ENCODE measurements at regions of chr4 and their contacts with region 1.

Region 1: GRCh38 chr4:98467627-98468072 is 190.8 kb downstream of the TSPAN5 start:
- DNase-seq: peak; percentile 48 to 84 (median 62)
- ATAC-seq: peak; percentile 97
- H3K4me3 ChIP-seq: peak overlapping the region; percentile 32
- H3K4me3 Mint-ChIP-seq: peak overlapping the region; percentile 59
- H3K27ac ChIP-seq: no peak overlapping the region
- H3K27ac Mint-ChIP-seq: no peak overlapping the region
- H3K4me1 ChIP-seq: peaks cover 18% of the 10 kb centered on the region
- H3K4me1 Mint-ChIP-seq: peaks cover 24% of the 10 kb centered on the region
- H3K27me3 ChIP-seq: no peaks in the 10 kb centered on the region
- H3K27me3 Mint-ChIP-seq: no peaks in the 10 kb centered on the region
- CTCF ChIP-seq: peak; percentile 84

Region 2: DNA sequence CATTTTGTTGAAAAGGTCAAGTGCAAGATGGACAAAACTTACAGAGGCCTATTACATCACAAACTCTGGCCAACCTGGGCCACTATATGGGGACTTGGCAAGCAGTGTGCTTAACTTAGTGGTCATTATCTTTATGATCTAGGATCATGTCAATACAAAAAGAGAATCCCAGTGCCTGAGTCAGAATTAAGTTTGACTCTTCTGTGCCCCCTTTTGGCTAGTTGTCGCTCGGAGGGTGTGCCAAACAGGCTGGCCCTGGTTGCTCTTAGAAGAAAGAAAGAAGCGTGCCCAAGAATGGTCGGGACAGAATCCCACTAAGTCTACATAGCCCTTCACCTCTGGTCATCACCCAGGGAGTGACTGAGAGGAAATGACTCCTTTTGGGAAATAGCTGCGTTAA is 361.2 kb after region 1 on chr4:
- CTCF ChIA-PET with region 1: no interaction called
- POLR2A ChIA-PET with region 1: no interaction called
- intact Hi-C with region 1: loop called (anchors 1 kb)
- DNase-seq: peak in 13 of 14 experiments; percentile 0 to 54 (median 17)
- ATAC-seq: no peak
- H3K4me3 ChIP-seq: no peak overlapping the region
- H3K4me3 Mint-ChIP-seq: no peak overlapping the region
- H3K27ac ChIP-seq: no peak overlapping the region
- H3K27ac Mint-ChIP-seq: no peak overlapping the region
- H3K4me1 ChIP-seq: no peaks in the 10 kb centered on the region
- H3K4me1 Mint-ChIP-seq: no peaks in the 10 kb centered on the region
- H3K27me3 ChIP-seq: no peaks in the 10 kb centered on the region
- H3K27me3 Mint-ChIP-seq: no peaks in the 10 kb centered on the region
- CTCF ChIP-seq: peak; percentile 20

Region 3: DNA sequence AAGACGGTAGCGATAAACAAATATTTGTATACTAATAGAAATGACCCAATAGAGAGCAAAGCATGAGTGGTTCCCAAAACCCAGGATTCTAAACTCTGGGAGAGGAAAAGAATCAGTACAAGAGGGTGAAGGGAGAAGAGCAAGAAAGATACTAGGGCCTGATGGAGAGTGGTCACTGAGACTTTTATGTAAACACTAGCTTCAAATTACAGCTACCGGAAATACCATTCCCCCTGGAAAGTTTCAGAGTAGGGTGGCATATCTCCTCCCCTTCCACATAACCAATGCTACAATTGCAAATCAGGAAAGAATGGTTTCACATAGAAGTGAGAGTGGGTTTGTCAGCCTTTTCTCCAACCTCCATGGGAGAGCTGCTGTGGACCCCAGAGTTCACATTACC is 384.2 kb after region 1 on chr4:
- CTCF ChIA-PET with region 1: no interaction called
- POLR2A ChIA-PET with region 1: no interaction called
- intact Hi-C with region 1: loop called in 1 of 2 experiments (anchors 5 kb)
- DNase-seq: no peak
- ATAC-seq: no peak
- H3K4me3 ChIP-seq: no peak overlapping the region
- H3K4me3 Mint-ChIP-seq: no peak overlapping the region
- H3K27ac ChIP-seq: no peak overlapping the region
- H3K27ac Mint-ChIP-seq: no peak overlapping the region
- H3K4me1 ChIP-seq: no peaks in the 10 kb centered on the region
- H3K4me1 Mint-ChIP-seq: no peaks in the 10 kb centered on the region
- H3K27me3 ChIP-seq: no peaks in the 10 kb centered on the region
- H3K27me3 Mint-ChIP-seq: peaks cover 12% of the 10 kb centered on the region
- CTCF ChIP-seq: no peak

Region 4: GRCh38 chr4:99219479-99219878 is 751.8 kb after region 1 on chr4:
- CTCF ChIA-PET with region 1: no interaction called
- POLR2A ChIA-PET with region 1: no interaction called
- intact Hi-C with region 1: no loop called
- DNase-seq: no peak
- ATAC-seq: no peak
- H3K4me3 ChIP-seq: no peak overlapping the region
- H3K4me3 Mint-ChIP-seq: no peak overlapping the region
- H3K27ac ChIP-seq: no peak overlapping the region
- H3K27ac Mint-ChIP-seq: no peak overlapping the region
- H3K4me1 ChIP-seq: no peaks in the 10 kb centered on the region
- H3K4me1 Mint-ChIP-seq: no peaks in the 10 kb centered on the region
- H3K27me3 ChIP-seq: no peaks in the 10 kb centered on the region
- H3K27me3 Mint-ChIP-seq: no peaks in the 10 kb centered on the region
- CTCF ChIP-seq: no peak

Region 5: GRCh38 chr4:99405433-99406115 is 937.9 kb after region 1 on chr4:
- CTCF ChIA-PET with region 1: no interaction called
- POLR2A ChIA-PET with region 1: no interaction called
- intact Hi-C with region 1: loop called in 1 of 2 experiments (anchors 2 kb)
- DNase-seq: peak; percentile 15 to 75 (median 48)
- ATAC-seq: peak; percentile 79
- H3K4me3 ChIP-seq: no peak overlapping the region
- H3K4me3 Mint-ChIP-seq: no peak overlapping the region
- H3K27ac ChIP-seq: no peak overlapping the region
- H3K27ac Mint-ChIP-seq: no peak overlapping the region
- H3K4me1 ChIP-seq: no peaks in the 10 kb centered on the region
- H3K4me1 Mint-ChIP-seq: peaks cover 5% of the 10 kb centered on the region
- H3K27me3 ChIP-seq: no peaks in the 10 kb centered on the region
- H3K27me3 Mint-ChIP-seq: no peaks in the 10 kb centered on the region
- CTCF ChIP-seq: peak; percentile 86

Region 6: GRCh38 chr4:99462875-99463464 is 995.3 kb after region 1 on chr4:
- CTCF ChIA-PET with region 1: no interaction called
- POLR2A ChIA-PET with region 1: no interaction called
- intact Hi-C with region 1: loop called (anchors 2 kb)
- DNase-seq: peak; percentile 4 to 67 (median 25)
- ATAC-seq: peak; percentile 70
- H3K4me3 ChIP-seq: no peak overlapping the region
- H3K4me3 Mint-ChIP-seq: no peak overlapping the region
- H3K27ac ChIP-seq: no peak overlapping the region
- H3K27ac Mint-ChIP-seq: no peak overlapping the region
- H3K4me1 ChIP-seq: no peaks in the 10 kb centered on the region
- H3K4me1 Mint-ChIP-seq: no peaks in the 10 kb centered on the region
- H3K27me3 ChIP-seq: no peaks in the 10 kb centered on the region
- H3K27me3 Mint-ChIP-seq: peaks cover 18% of the 10 kb centered on the region
- CTCF ChIP-seq: peak; percentile 83

Measured in CD4-positive, alpha-beta T cell (primary cell).